Esophagus muscularis mucosa (tissue), 4 donors: ENCODE measurements at regions of chr3 and their contacts with region 1.

Region 1: DNA sequence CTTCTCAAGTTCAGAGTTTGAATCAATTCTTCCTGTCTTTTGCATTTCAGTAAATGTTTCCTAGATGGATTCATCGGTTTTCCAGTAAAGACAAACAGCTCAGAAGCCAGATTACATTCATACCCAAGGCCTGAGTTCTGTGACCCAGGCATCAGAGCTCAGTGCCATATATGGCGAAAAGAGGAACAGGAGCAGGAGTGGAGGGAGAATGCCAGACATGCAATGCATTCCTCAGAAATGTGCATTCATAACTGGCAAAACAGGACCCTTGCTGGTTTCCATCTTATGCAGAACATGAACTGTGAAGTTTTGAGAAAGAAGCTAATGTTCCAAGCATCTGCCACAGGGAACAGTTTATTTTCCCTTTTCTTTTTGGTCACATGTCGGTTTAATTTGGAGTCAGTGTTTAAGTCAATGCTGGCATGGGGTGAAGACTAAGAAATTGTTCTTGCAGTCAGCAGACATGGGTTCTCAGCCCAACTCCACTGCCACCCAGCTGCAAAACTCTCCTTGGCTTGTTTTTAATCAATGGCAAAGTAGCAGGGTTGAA is 116.5 kb downstream of the LPP start:
- DNase-seq: no peak
- H3K4me3 ChIP-seq: peak overlapping the region in 1 of 4 donors; percentile 11
- H3K27ac ChIP-seq: peak overlapping the region; percentile 90 to 98 (median 93)
- H3K4me1 ChIP-seq: peaks cover 73 to 100% (median 97%) of the 10 kb centered on the region in 4 donors
- H3K27me3 ChIP-seq: no peaks in the 10 kb centered on the region
- CTCF ChIP-seq: peak in 2 of 3 experiments; percentile 43 to 65
- EP300 ChIP-seq: peak; percentile 97
- POLR2A ChIP-seq: no peak

Region 2: GRCh38 chr3:188229177-188229576 is 41.3 kb before region 1 on chr3:
- intact Hi-C with region 1: loop called (anchors 5 kb)
- DNase-seq: peak; percentile 53
- H3K4me3 ChIP-seq: peak overlapping the region in 3 of 4 donors; percentile 2 to 28 (median 7)
- H3K27ac ChIP-seq: peak overlapping the region; percentile 90 to 98 (median 94)
- H3K4me1 ChIP-seq: peaks cover 48 to 100% (median 99%) of the 10 kb centered on the region in 4 donors
- H3K27me3 ChIP-seq: no peaks in the 10 kb centered on the region
- CTCF ChIP-seq: no peak
- EP300 ChIP-seq: no peak
- POLR2A ChIP-seq: no peak

Region 3: DNA sequence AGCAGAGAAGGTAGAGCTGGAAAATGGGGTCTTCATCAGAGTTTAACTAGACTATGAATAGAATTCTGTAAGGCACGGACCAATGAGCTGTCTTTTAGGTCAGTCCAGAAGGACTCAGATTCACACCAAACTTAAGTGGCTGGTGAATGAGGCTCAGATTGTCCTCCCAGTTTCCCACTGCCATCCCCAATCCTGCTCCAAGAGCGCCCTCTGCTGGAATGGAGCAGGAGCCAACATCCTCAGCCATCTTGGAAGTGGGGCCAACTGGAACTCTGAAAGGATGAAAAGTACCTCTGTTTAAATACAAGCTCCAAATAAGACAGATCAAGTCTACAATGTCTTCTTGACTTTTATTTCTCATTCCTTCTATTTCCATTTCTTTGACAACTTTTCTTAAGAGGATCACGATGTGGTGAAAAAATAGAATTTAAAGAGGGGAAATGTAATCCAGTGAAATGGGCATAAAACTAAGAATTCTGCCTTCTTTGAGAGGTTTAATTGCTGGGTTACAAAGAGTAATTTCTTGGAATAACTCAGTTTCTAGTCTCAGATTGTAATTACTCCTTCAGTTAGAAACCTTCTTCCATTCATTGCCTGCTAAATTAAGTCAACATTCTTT is 684.2 kb after region 1 on chr3:
- intact Hi-C with region 1: loop called (anchors 10 kb)
- DNase-seq: peak; percentile 96
- H3K4me3 ChIP-seq: no peak overlapping the region
- H3K27ac ChIP-seq: peak overlapping the region in 2 of 4 donors; percentile 28 to 42
- H3K4me1 ChIP-seq: peaks cover 31 to 49% (median 40%) of the 10 kb centered on the region in 4 donors
- H3K27me3 ChIP-seq: no peaks in the 10 kb centered on the region
- CTCF ChIP-seq: peak; percentile 93 to 96 (median 95)
- EP300 ChIP-seq: no peak
- POLR2A ChIP-seq: no peak